ENCODE measurements at regions of chr12 and their contacts with region 1.

Region 1: DNA sequence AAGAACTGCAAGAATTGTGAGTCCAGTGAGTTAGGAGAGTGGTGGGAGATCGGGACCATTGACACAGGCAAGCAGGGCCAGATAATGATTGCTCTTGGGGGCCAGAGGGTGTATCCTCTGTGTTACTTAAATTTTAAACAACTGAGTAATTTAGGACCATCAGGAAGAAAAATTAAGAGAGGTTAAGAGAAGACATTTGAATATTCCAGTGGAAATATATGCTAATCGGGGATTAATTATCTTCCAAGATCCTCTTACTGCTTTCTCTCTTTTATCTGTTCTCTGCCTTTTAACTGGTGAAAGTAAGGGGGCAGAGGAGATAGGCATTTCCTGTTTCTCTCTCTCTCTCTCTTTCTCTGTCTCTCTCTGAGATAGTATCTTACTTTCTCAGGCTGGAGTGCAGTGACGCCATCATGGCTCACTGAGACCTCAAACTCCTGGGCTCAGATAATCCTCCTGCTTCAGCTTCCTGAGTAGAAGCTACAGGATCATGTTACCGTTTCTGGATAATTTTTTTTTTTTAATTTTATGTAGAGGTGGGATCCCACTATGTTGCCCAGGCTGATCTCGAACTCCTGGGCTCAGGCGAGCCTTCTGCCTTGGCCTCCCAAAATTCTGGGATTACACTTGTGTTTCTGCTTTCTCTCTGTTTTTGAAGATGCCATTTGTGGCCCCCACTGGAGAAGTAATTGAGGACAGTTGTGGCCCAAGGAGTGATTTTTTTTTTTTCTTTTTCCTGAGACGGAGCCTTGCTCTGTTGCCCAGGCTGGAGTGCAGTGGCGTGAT is 85.1 kb downstream of the DIP2B start:
- DNase-seq: peak in 3 of 5 donors; percentile 2 to 30 (median 15)
- H3K4me3 ChIP-seq: no peak overlapping the region
- H3K4me3 Mint-ChIP-seq: peak overlapping the region in 5 of 8 donors; percentile 3 to 55 (median 19)
- H3K27ac ChIP-seq: no peak overlapping the region
- H3K27ac Mint-ChIP-seq: peak overlapping the region; percentile 13 to 65 (median 39)
- H3K4me1 ChIP-seq: peaks cover 12% of the 10 kb centered on the region
- H3K4me1 Mint-ChIP-seq: peaks cover 18 to 37% (median 21%) of the 10 kb centered on the region in 4 donors
- H3K27me3 ChIP-seq: no peaks in the 10 kb centered on the region
- H3K27me3 Mint-ChIP-seq: no peaks in the 10 kb centered on the region

Region 2: GRCh38 chr12:50637870-50638481 is 48.1 kb after region 1 on chr12:
- CTCF ChIA-PET with region 1: no interaction called
- POLR2A ChIA-PET with region 1: no interaction called
- intact Hi-C with region 1: loop called (anchors 10 kb)
- DNase-seq: peak in 4 of 5 donors; percentile 48 to 59 (median 52)
- H3K4me3 ChIP-seq: no peak overlapping the region
- H3K4me3 Mint-ChIP-seq: no peak overlapping the region
- H3K27ac ChIP-seq: no peak overlapping the region
- H3K27ac Mint-ChIP-seq: peak overlapping the region; percentile 21 to 83 (median 66)
- H3K4me1 ChIP-seq: peaks cover 8% of the 10 kb centered on the region
- H3K4me1 Mint-ChIP-seq: peaks cover 17 to 18% (median 18%) of the 10 kb centered on the region in 4 donors
- H3K27me3 ChIP-seq: no peaks in the 10 kb centered on the region
- H3K27me3 Mint-ChIP-seq: no peaks in the 10 kb centered on the region